Activated CD4-positive, alpha-beta T cell treated with anti-CD3 and anti-CD28 coated beads, Interleukin-2, amount 10 ng/mL, durations not matched to agents 24 days and 14 days (primary cell): ENCODE measurements at regions of chr11 and their contacts with region 1.

Region 1: GRCh38 chr11:35040221-35040942 is 98.6 kb upstream of the CD44 start:
- DNase-seq: peak; percentile 91
- H3K4me3 Mint-ChIP-seq: peak overlapping the region; percentile 77
- H3K27ac Mint-ChIP-seq: peak overlapping the region; percentile 94
- H3K4me1 Mint-ChIP-seq: peaks cover 52% of the 10 kb centered on the region
- H3K27me3 Mint-ChIP-seq: peaks cover 9% of the 10 kb centered on the region

Region 2: DNA sequence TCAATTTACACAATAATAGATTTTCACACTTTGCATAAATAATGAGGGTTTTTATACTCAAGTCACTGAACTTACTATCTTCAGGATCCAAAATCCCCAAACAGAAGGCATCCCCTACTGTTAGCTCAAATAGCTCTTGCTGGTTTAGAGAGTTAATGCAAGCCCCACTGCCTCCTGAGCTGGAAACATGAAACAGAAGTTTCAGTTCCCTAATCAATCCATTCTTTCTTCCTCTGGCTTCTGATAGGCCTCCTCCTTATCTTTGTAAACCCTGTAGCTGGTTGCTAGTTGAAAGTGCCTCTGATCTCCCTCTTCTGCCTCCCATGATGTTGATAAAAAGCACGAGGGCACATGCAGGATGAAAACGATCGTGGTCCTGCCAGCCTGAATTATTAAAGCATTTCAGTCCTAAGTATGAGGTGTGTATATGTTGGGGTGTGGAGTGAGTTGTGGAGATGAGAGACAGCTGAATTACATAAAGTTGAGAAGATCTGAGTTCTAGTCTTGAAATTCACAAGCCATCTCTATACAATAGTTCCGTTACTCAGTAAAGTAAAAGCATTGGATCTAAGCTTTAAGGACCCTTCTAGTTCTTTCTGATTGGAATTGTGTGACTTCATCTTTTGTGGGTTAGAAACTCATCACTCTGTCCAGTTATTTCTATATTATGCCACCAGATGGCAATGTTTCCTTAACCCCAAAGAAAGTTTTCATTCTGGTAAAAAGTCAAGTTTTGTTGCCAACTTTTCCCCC is 454.5 kb before region 1 on chr11:
- intact Hi-C with region 1: no loop called
- DNase-seq: peak; percentile 57
- H3K4me3 Mint-ChIP-seq: no peak overlapping the region
- H3K27ac Mint-ChIP-seq: no peak overlapping the region
- H3K4me1 Mint-ChIP-seq: no peaks in the 10 kb centered on the region
- H3K27me3 Mint-ChIP-seq: peaks cover 40% of the 10 kb centered on the region

Region 3: GRCh38 chr11:34899633-34900016 is 140.8 kb before region 1 on chr11:
- intact Hi-C with region 1: no loop called
- DNase-seq: no peak
- H3K4me3 Mint-ChIP-seq: no peak overlapping the region
- H3K27ac Mint-ChIP-seq: no peak overlapping the region
- H3K4me1 Mint-ChIP-seq: no peaks in the 10 kb centered on the region
- H3K27me3 Mint-ChIP-seq: no peaks in the 10 kb centered on the region

Region 4: GRCh38 chr11:34916015-34916842 is 124.2 kb before region 1 on chr11 and contains the starts of genes APIP and PDHX:
- intact Hi-C with region 1: loop called (anchors 1 kb)
- DNase-seq: peak; percentile 98
- H3K4me3 Mint-ChIP-seq: peak within 1 kb of the TSS; percentile 98
- H3K27ac Mint-ChIP-seq: peak within 1 kb of the TSS; percentile 95
- H3K4me1 Mint-ChIP-seq: peaks cover 25% of the 10 kb centered on the region
- H3K27me3 Mint-ChIP-seq: no peaks in the 10 kb centered on the region
- total RNA-seq, gene APIP: 26.8 and 29.6 TPM in 2 replicates
- total RNA-seq, gene PDHX: 31.0 and 35.7 TPM in 2 replicates

Region 5: GRCh38 chr11:34988294-34989255 is 51.8 kb before region 1 on chr11:
- intact Hi-C with region 1: no loop called
- DNase-seq: no peak
- H3K4me3 Mint-ChIP-seq: no peak overlapping the region
- H3K27ac Mint-ChIP-seq: no peak overlapping the region
- H3K4me1 Mint-ChIP-seq: peaks cover 10% of the 10 kb centered on the region
- H3K27me3 Mint-ChIP-seq: no peaks in the 10 kb centered on the region

Region 6: GRCh38 chr11:35050541-35050995 is 10.2 kb after region 1 on chr11:
- intact Hi-C with region 1: loop called (anchors 1 kb)
- DNase-seq: peak; percentile 73
- H3K4me3 Mint-ChIP-seq: peak overlapping the region; percentile 83
- H3K27ac Mint-ChIP-seq: peak overlapping the region; percentile 89
- H3K4me1 Mint-ChIP-seq: peaks cover 56% of the 10 kb centered on the region
- H3K27me3 Mint-ChIP-seq: no peaks in the 10 kb centered on the region

Region 7: GRCh38 chr11:35126000-35126878 is 85.9 kb after region 1 on chr11:
- intact Hi-C with region 1: loop called (anchors 1 kb)
- DNase-seq: peak; percentile 79
- H3K4me3 Mint-ChIP-seq: peak overlapping the region; percentile 74
- H3K27ac Mint-ChIP-seq: peak overlapping the region; percentile 80
- H3K4me1 Mint-ChIP-seq: peaks cover 50% of the 10 kb centered on the region
- H3K27me3 Mint-ChIP-seq: peaks cover 3% of the 10 kb centered on the region

Region 8: DNA sequence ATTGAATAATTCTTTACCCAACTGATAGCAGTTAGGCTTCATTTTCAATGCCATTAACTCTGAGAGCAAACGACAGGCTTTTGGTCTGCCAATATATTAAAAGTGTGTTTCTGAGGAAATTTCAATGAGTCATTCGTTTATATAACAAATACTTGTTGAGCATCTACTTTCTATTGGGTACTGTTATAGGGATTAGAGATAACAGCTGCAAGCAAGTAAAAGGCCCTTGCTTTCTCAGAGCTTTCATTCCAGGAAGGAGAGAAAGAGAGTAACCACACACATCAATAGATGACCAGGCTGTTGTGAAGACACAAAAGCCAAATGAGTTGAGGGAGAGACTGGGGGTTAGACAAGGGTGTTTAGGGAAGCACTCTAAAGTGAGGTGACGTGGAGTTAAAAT is 134.3 kb after region 1 on chr11:
- intact Hi-C with region 1: loop called (anchors 1 kb)
- DNase-seq: peak; percentile 69
- H3K4me3 Mint-ChIP-seq: peak overlapping the region; percentile 57
- H3K27ac Mint-ChIP-seq: peak overlapping the region; percentile 85
- H3K4me1 Mint-ChIP-seq: peaks cover 85% of the 10 kb centered on the region
- H3K27me3 Mint-ChIP-seq: no peaks in the 10 kb centered on the region

Region 9: DNA sequence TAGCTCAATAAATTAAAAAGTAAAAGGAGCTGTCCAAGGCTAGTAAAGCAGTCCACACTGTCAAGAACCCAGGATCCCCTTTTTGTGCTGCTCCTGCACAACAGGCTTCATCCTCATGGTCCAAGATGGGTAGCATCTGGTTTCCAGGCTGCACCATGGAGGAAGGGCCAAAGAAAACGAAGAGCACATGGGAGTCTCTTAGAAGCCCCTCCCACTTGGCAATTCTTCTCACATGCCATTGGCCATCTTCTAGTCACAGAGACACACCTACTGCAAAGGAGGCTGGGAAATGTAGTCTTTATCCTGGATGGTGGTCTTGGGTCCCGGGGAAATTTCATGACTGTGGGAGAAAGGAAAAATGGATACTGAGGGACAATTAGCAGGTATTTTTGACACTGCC is 1293.5 kb after region 1 on chr11:
- intact Hi-C with region 1: no loop called
- DNase-seq: no peak
- H3K4me3 Mint-ChIP-seq: no peak overlapping the region
- H3K27ac Mint-ChIP-seq: no peak overlapping the region
- H3K4me1 Mint-ChIP-seq: peaks cover 6% of the 10 kb centered on the region
- H3K27me3 Mint-ChIP-seq: peaks cover 29% of the 10 kb centered on the region